HEK293 (cell line): ENCODE measurements at regions of chr20 and their contacts with region 1.

Region 1: GRCh38 chr20:52496191-52496590 is 304.6 kb upstream of the ZFP64 start:
- H3K4me3 ChIP-seq: no peak overlapping the region
- H3K27ac ChIP-seq: no peak overlapping the region
- H3K4me1 ChIP-seq: no peaks in the 10 kb centered on the region
- CTCF ChIP-seq: no peak

Region 2: DNA sequence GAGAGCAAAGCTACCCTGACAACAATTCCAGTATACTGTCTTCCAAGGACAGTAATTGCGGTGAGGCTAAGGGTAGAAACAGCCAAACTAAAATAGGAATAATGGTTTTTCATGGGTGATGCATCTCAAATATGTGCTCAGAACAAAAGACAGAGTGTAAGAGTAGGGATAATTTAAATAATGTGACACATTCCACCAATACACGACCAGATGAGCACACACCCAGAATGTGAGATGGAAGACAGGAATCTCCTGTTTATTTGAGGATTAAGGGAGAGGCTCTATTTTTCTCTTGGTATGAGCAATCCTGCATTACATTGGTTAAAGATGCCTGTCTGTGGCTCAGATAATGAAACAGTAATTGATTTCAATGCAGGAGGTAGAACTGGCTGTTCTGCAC is 11.8 kb before region 1 on chr20:
- CTCF ChIA-PET with region 1: interaction called, 5 read pairs
- POLR2A ChIA-PET with region 1: interaction called, 14 read pairs
- H3K4me3 ChIP-seq: no peak overlapping the region
- H3K27ac ChIP-seq: no peak overlapping the region
- H3K4me1 ChIP-seq: no peaks in the 10 kb centered on the region
- CTCF ChIP-seq: no peak